ENCODE measurements at regions of chr4 and their contacts with region 1.

Region 1: DNA sequence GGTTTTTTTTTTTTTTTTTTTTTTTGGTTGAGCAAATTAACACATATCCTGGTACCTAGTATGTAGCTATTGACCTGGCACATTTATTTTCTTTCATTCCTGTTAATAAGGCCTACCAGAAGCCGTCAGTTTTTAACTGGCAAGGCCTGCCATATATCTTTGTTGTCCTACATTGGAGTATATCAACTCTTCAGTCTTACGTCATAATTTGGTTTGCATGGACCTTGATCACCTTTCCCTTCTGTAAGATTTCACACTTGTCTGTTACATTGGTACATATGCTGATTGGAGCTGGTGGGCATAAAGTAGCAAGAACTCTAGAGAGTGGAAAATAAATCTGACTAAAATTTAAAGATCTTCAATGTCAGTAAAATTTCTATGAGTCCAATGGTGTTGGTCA is 1658.0 kb downstream of the C4orf33 start:
- DNase-seq: no peak
- H3K4me3 ChIP-seq: no peak overlapping the region
- H3K27ac ChIP-seq: no peak overlapping the region
- H3K4me1 ChIP-seq: no peaks in the 10 kb centered on the region
- H3K27me3 ChIP-seq: no peaks in the 10 kb centered on the region
- CTCF ChIP-seq: no peak

Region 2: DNA sequence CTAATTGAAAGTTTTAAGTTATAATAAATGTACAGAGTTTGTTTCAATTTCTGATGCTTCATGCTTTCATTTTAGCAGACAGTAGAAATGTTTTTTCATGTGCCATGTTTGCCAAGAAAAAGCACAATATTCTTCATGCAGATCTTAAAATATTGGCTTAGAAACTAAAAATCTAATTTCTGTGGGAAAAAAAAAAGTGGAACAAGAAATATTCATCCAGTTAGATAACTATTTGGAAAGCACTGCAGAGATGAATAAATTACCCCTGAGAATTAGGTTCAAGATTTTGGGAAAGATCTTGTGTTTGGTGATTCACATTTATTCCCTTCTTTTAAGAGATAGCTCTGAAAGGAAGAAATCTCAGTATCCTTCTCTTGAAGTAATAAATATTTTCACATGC is 745.5 kb before region 1 on chr4:
- CTCF ChIA-PET with region 1: no interaction called
- POLR2A ChIA-PET with region 1: no interaction called
- intact Hi-C with region 1: no loop called
- DNase-seq: no peak
- H3K4me3 ChIP-seq: no peak overlapping the region
- H3K27ac ChIP-seq: no peak overlapping the region
- H3K4me1 ChIP-seq: no peaks in the 10 kb centered on the region
- H3K27me3 ChIP-seq: no peaks in the 10 kb centered on the region
- CTCF ChIP-seq: no peak

Region 3: GRCh38 chr4:130738233-130738632 is 15.7 kb before region 1 on chr4:
- CTCF ChIA-PET with region 1: no interaction called
- POLR2A ChIA-PET with region 1: no interaction called
- intact Hi-C with region 1: no loop called
- DNase-seq: no peak
- H3K4me3 ChIP-seq: no peak overlapping the region
- H3K27ac ChIP-seq: no peak overlapping the region
- H3K4me1 ChIP-seq: no peaks in the 10 kb centered on the region
- H3K27me3 ChIP-seq: no peaks in the 10 kb centered on the region
- CTCF ChIP-seq: no peak

Region 4: DNA sequence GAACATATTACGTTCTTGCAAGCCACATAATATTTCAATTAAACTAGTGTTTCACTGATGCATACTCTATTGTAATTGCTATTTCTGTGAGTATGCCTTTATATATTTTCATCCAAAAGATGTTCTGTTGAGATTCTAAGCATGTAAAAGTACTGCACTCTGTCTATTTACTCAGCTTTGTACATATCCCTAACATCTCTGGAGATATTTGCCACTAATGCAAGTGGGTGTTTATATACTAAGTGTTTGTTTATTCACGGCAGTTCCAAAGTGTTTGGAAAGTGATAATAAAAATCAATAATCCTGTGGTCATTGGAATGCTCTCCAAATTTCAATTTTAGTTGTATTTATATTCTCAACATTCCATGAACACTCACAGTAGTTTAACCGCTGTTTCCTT is 331.1 kb after region 1 on chr4:
- CTCF ChIA-PET with region 1: no interaction called
- POLR2A ChIA-PET with region 1: no interaction called
- intact Hi-C with region 1: loop called (anchors 10 kb)
- DNase-seq: no peak
- H3K4me3 ChIP-seq: no peak overlapping the region
- H3K27ac ChIP-seq: no peak overlapping the region
- H3K4me1 ChIP-seq: no peaks in the 10 kb centered on the region
- H3K27me3 ChIP-seq: no peaks in the 10 kb centered on the region
- CTCF ChIP-seq: no peak

Region 5: DNA sequence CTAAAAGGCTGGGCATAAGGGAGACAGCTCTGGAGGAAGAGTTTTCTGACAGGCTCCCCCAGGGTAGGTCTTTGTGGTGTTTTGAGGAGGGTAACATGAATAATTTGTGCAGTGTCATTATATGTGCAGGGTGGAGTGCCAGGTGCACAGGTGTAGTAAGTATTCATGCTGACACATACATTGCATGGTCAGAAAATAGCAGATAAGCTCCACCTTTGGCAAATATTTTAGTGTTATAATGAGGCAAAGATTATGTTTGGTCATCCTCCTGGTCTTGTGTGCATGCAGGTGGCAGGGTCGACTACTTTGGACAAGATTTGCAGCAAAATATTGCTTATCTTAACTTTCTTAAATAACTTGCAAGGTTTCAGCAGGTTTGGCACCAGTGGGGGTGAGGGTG is 1484.8 kb after region 1 on chr4:
- CTCF ChIA-PET with region 1: no interaction called
- POLR2A ChIA-PET with region 1: no interaction called
- intact Hi-C with region 1: loop called (anchors 10 kb)
- DNase-seq: no peak
- H3K4me3 ChIP-seq: no peak overlapping the region
- H3K27ac ChIP-seq: no peak overlapping the region
- H3K4me1 ChIP-seq: no peaks in the 10 kb centered on the region
- H3K27me3 ChIP-seq: no peaks in the 10 kb centered on the region
- CTCF ChIP-seq: no peak